B cell (primary cell): ENCODE measurements at regions of chr20 and their contacts with region 1.

Region 1: GRCh38 chr20:17968366-17969279 is at the starts of genes MGME1 and SNX5:
- DNase-seq: peak; percentile 100
- ATAC-seq: peak; percentile 82
- H3K4me3 ChIP-seq: peak within 1 kb of the TSS; percentile 76 to 99 (median 97)
- H3K4me3 Mint-ChIP-seq: peak within 1 kb of the TSS; percentile 96
- H3K27ac ChIP-seq: peak within 1 kb of the TSS; percentile 96 to 97
- H3K27ac Mint-ChIP-seq: peak within 1 kb of the TSS; percentile 98
- H3K4me1 ChIP-seq: peaks cover 58 to 60% of the 10 kb centered on the region in 2 donors
- H3K4me1 Mint-ChIP-seq: peaks cover 78% of the 10 kb centered on the region
- H3K27me3 ChIP-seq: no peaks in the 10 kb centered on the region
- H3K27me3 Mint-ChIP-seq: no peaks in the 10 kb centered on the region
- CTCF ChIP-seq: no peak
- total RNA-seq, gene MGME1: 33.2 and 33.3 TPM in 2 replicates
- total RNA-seq, gene SNX5: 119 and 128 TPM in 2 replicates

Region 2: DNA sequence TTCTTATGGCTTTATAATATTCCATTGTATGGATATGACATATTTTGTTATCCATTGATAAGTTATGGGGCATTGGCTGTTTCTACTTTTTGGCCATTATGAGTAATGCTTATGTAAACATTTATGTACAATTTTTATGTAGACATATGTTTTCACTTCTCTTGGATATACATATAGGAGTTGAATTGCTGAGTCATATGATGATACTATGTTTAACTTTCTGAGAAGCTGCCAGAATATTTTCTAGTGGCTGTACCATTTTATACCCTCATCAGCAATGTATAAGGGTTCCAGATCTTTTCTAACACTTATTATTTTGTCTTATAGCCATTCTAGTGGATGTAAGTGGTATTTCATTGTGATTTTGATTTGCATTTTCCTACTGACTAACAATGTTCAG is 1197.4 kb before region 1 on chr20:
- CTCF ChIA-PET with region 1: no interaction called
- POLR2A ChIA-PET with region 1: no interaction called
- intact Hi-C with region 1: no loop called
- DNase-seq: no peak
- ATAC-seq: no peak
- H3K4me3 ChIP-seq: no peak overlapping the region
- H3K4me3 Mint-ChIP-seq: no peak overlapping the region
- H3K27ac ChIP-seq: no peak overlapping the region
- H3K27ac Mint-ChIP-seq: no peak overlapping the region
- H3K4me1 ChIP-seq: no peaks in the 10 kb centered on the region
- H3K4me1 Mint-ChIP-seq: no peaks in the 10 kb centered on the region
- H3K27me3 ChIP-seq: peaks cover 0 to 12% (median 4%) of the 10 kb centered on the region in 4 experiments
- H3K27me3 Mint-ChIP-seq: peaks cover 40% of the 10 kb centered on the region
- CTCF ChIP-seq: no peak

Region 3: DNA sequence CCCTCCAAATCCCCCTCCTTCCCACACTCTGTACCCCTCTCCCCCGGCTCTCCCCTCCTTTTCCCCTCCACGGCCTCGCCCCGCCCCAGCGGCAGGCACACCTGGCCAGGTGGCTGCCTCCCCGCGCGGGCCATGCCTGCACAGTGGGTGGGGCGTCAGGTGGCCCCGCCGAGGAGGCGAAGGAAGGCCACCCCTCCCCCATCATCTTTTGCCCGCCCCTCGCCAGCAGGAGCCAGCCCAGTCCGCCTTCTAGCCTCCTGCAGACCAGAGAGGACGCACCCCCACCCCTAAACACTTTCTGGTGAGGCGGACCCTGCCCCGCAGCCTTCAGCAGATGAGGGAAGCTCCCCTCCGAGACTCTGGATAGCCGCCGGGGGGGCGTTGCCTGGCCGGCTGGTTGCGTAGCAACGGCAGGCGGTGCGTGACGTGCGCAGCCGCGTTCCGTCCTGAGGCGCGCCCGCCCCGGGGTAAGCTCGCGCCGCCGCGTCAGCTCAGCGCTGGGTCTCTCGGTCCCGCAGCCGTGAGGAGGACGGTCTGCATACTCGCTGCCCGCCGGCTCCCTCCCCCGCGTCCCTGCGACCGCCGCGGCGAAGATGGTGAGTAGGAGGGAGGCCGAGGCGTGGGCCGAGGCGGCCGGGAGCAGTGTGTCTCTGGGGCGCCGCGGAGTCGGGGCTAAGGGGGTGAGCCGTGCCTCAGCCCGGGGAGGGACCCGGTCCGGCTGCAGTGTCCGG is 398.8 kb before region 1 on chr20 and contains the start of gene DSTN:
- CTCF ChIA-PET with region 1: interaction called, 3 read pairs
- POLR2A ChIA-PET with region 1: interaction called, 3 read pairs
- intact Hi-C with region 1: loop called (anchors 1 kb)
- DNase-seq: peak; percentile 93
- ATAC-seq: peak; percentile 91
- H3K4me3 ChIP-seq: peak within 1 kb of the TSS; percentile 77 to 97 (median 83)
- H3K4me3 Mint-ChIP-seq: peak within 1 kb of the TSS; percentile 94
- H3K27ac ChIP-seq: peak within 1 kb of the TSS in 1 of 2 donors; percentile 72
- H3K27ac Mint-ChIP-seq: peak within 1 kb of the TSS; percentile 89
- H3K4me1 ChIP-seq: peaks cover 11 to 14% of the 10 kb centered on the region in 2 donors
- H3K4me1 Mint-ChIP-seq: peaks cover 20% of the 10 kb centered on the region
- H3K27me3 ChIP-seq: peaks cover 0 to 12% (median 2%) of the 10 kb centered on the region in 4 experiments
- H3K27me3 Mint-ChIP-seq: peaks cover 8% of the 10 kb centered on the region
- CTCF ChIP-seq: no peak
- total RNA-seq, gene DSTN: 12.9 and 13.4 TPM in 2 replicates

Region 4: GRCh38 chr20:17898548-17898994 is 70.1 kb before region 1 on chr20:
- CTCF ChIA-PET with region 1: interaction called, 5 read pairs
- POLR2A ChIA-PET with region 1: no interaction called
- intact Hi-C with region 1: loop called (anchors 2 kb)
- DNase-seq: peak; percentile 78
- ATAC-seq: peak; percentile 80
- H3K4me3 ChIP-seq: no peak overlapping the region
- H3K4me3 Mint-ChIP-seq: no peak overlapping the region
- H3K27ac ChIP-seq: no peak overlapping the region
- H3K27ac Mint-ChIP-seq: peak overlapping the region; percentile 0
- H3K4me1 ChIP-seq: peaks cover 47 to 48% of the 10 kb centered on the region in 2 donors
- H3K4me1 Mint-ChIP-seq: peaks cover 46% of the 10 kb centered on the region
- H3K27me3 ChIP-seq: peaks cover 0 to 4% (median 2%) of the 10 kb centered on the region in 4 experiments
- H3K27me3 Mint-ChIP-seq: peaks cover 21% of the 10 kb centered on the region
- CTCF ChIP-seq: peak; percentile 98

Region 5: DNA sequence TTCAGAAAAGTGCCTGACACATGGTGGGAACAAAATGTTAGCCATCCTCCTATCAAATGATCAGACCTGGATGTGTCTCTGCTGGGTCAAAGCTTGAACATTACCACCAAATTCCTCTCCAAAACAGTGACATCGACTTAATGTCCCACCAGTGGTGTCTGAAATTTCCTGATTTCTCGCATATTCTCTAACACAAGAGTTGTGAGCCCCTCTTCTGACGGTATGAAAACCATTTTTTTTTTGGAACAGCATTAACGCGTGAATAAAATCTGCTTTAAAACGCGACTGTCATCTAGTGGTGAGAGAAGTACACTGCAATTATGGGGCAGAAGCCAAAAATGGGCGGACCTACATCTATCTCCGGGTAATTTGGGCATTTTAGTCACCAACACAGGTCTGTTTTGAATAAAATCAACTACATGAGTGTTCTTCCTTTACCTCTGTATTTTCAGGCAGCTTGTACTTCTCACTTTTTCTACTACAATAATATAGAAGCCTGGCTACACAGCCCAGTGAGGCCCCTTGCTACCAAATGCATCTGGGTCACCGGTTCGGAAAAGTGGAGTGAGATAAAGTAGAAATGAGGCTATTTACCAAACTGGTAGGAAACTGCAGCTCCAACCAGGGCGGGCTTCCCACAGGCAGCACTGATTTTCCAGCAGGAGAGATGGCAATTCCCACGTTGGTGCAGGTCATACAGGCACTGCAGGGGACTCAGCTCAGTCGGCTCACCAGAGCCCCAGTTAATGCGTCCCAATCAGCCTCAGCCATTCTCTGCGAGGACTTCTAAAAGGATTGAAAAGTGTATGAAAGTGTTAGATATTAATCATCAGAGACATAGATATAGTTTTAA is 27.6 kb after region 1 on chr20:
- CTCF ChIA-PET with region 1: interaction called, 54 read pairs
- POLR2A ChIA-PET with region 1: interaction called, 7 read pairs
- intact Hi-C with region 1: loop called (anchors 1 kb)
- DNase-seq: peak; percentile 79
- ATAC-seq: peak; percentile 94
- H3K4me3 ChIP-seq: no peak overlapping the region
- H3K4me3 Mint-ChIP-seq: no peak overlapping the region
- H3K27ac ChIP-seq: no peak overlapping the region
- H3K27ac Mint-ChIP-seq: peak overlapping the region; percentile 54
- H3K4me1 ChIP-seq: peaks cover 16% of the 10 kb centered on the region in 2 donors
- H3K4me1 Mint-ChIP-seq: peaks cover 22% of the 10 kb centered on the region
- H3K27me3 ChIP-seq: no peaks in the 10 kb centered on the region
- H3K27me3 Mint-ChIP-seq: peaks cover 3% of the 10 kb centered on the region
- CTCF ChIP-seq: peak; percentile 99

Region 6: GRCh38 chr20:18466894-18467730 is 498.5 kb after region 1 on chr20 and contains the starts of genes DZANK1 and POLR3F:
- CTCF ChIA-PET with region 1: no interaction called
- POLR2A ChIA-PET with region 1: no interaction called
- intact Hi-C with region 1: loop called (anchors 10 kb)
- DNase-seq: peak; percentile 94
- ATAC-seq: peak; percentile 95
- H3K4me3 ChIP-seq: peak within 1 kb of the TSS; percentile 54 to 97 (median 85)
- H3K4me3 Mint-ChIP-seq: peak within 1 kb of the TSS; percentile 97
- H3K27ac ChIP-seq: peak within 1 kb of the TSS; percentile 39 to 81
- H3K27ac Mint-ChIP-seq: peak within 1 kb of the TSS; percentile 97
- H3K4me1 ChIP-seq: peaks cover 12 to 15% of the 10 kb centered on the region in 2 donors
- H3K4me1 Mint-ChIP-seq: peaks cover 25% of the 10 kb centered on the region
- H3K27me3 ChIP-seq: no peaks in the 10 kb centered on the region
- H3K27me3 Mint-ChIP-seq: no peaks in the 10 kb centered on the region
- CTCF ChIP-seq: no peak
- total RNA-seq, gene DZANK1: 5.6 TPM in 2 replicates
- total RNA-seq, gene POLR3F: 13.1 and 13.7 TPM in 2 replicates

Region 7: DNA sequence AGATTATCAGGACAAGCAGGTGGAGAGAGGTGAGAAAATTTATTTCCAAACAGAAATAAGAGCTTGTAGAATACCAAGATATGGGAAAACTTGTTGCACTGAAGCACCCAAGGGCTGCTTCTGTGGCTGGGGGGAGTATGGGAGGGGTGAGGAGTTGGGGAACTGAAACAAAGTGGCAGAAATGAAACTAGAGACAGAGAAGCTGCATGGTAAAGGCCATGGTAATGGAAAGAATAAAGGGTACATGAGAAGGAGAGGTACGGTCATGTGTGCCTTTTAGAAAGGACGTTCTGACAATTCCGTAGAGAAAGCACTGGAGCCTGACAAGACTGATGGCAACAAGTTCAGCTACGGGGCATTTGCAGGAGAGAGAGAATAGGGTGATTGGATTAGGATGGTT is 1737.8 kb after region 1 on chr20:
- CTCF ChIA-PET with region 1: no interaction called
- POLR2A ChIA-PET with region 1: no interaction called
- intact Hi-C with region 1: loop called (anchors 10 kb)
- DNase-seq: peak; percentile 84
- ATAC-seq: peak; percentile 93
- H3K4me3 ChIP-seq: peak overlapping the region in 1 of 5 experiments; percentile 18
- H3K4me3 Mint-ChIP-seq: no peak overlapping the region
- H3K27ac ChIP-seq: peak overlapping the region; percentile 61 to 65
- H3K27ac Mint-ChIP-seq: no peak overlapping the region
- H3K4me1 ChIP-seq: peaks cover 49 to 53% of the 10 kb centered on the region in 2 donors
- H3K4me1 Mint-ChIP-seq: peaks cover 30% of the 10 kb centered on the region
- H3K27me3 ChIP-seq: no peaks in the 10 kb centered on the region
- H3K27me3 Mint-ChIP-seq: no peaks in the 10 kb centered on the region
- CTCF ChIP-seq: no peak